Left cardiac atrium (tissue), 4 donors: ENCODE measurements at regions of chr3 and their contacts with region 1.

Region 1: DNA sequence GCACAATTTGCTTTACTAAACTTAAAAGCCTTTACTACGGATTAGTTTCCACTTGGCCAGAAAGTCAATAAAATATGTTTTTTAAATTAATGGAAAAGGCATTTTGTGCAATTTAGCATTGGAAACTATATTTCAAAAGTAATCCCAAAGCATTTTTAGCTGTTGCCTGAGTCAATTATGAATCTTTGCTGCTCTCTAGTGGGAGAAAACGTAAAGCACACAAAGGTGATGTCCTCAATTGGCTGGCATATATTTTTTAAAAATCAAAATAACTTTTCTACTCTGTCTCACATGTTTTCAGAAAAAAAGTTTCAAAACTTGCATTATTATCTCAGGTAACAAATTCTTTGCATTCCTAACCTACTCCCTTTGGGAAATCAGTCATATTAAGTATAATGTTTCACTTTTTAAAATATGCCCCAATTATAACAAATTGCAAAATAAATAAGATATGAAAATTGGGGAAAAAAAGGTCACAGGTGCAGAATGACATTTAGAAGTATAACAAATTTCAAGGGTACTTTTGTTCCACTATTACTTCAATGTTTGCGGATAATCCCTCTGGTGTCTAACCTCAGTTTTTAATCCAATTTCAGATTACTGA is 47.2 kb upstream of the TEX55 start:
- DNase-seq: no peak
- ATAC-seq: no peak

Region 2: GRCh38 chr3:118884748-118885206 is 213.9 kb before region 1 on chr3:
- intact Hi-C with region 1: loop called (anchors 1 to 2 kb)
- DNase-seq: peak; percentile 76
- ATAC-seq: peak; percentile 87 to 89

Region 3: DNA sequence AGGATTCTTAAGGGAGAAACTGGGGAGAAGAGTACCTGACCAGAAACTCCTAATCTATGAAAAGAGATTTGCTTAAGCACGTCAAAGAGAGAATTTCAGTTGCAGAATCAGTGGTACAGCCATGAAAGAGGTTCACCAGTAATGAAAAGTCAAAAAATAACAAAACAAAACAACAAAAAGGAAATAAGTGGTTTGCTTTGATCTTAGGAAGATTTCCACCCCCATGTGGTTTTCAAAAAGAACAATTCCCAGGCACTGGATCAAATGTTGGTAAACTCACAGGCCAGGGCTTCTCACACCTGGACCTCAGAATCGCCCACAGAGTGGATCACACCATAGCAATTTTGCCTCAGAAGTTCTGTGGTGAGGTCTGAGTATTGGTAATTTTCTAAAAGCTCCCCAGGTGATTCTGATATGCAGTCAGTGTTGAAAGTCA is 297.2 kb after region 1 on chr3:
- intact Hi-C with region 1: no loop called
- DNase-seq: no peak
- ATAC-seq: no peak